ENCODE measurements at regions of chr16 and their contacts with region 1.

Region 1: DNA sequence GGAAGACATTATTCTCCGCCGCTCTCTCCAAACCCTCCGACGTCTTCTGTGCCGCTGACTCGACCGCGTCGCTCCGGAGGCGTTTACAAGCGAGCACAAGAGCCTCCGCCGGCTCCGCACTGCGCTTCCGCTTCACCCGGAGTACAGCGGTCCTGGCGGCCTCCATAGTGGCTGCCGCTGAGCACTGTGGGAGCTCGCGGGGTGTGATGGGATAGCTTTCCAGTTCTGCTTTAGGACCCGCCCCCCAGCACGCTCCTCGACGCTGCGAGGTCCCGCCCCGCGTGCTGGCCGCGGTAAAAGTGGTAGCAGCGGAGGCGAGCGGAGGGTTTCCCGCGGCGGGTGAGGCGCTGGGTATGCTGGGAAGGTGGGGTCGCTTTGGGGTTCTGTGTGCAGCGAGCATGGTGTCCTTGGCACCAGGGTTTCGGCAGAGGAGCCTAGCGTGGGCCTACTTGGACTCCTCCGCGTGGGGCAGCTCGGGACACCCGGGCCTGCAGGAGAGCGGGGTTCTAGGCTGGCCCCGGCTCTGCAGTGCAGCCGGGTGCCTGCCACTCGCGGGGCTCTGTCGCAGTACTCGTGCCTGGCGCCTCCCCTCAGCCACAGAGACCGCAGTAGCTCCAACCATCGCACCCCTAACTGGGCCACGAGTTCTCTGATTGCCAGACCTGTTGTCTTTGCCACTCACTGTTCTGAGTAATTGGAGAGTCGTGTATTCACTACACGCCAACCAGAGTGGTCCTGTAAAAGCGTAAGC is at the starts of genes PRMT7 and SLC7A6OS:
- DNase-seq: peak; percentile 90
- ATAC-seq: peak; percentile 99
- H3K4me3 ChIP-seq: peak within 1 kb of the TSS; percentile 77 to 91 (median 90)
- H3K27ac ChIP-seq: peak within 1 kb of the TSS; percentile 85
- H3K4me1 ChIP-seq: peaks cover 44% of the 10 kb centered on the region
- H3K27me3 ChIP-seq: no peaks in the 10 kb centered on the region; a peak in 1 of 5 replicates
- CTCF ChIP-seq: 0 out of 2 replicates have a peak, but pooled peaks have one; percentile 23
- EP300 ChIP-seq: peak in 1 of 2 experiments; percentile 16; a peak in 1 of 4 replicates
- POLR2A ChIP-seq: peak; percentile 97
- RAD21 ChIP-seq: peak; percentile 66
- total RNA-seq, gene PRMT7: 46.7 and 55.0 TPM in 2 replicates
- total RNA-seq, gene SLC7A6OS: 21.5 and 21.6 TPM in 2 replicates

Region 2: GRCh38 chr16:68244903-68245853 is 65.8 kb before region 1 on chr16 and contains the start of gene PLA2G15:
- CTCF ChIA-PET with region 1: no interaction called
- POLR2A ChIA-PET with region 1: interaction called, 16 read pairs
- in situ Hi-C with region 1: no loop called
- intact Hi-C with region 1: no loop called
- DNase-seq: peak; percentile 87
- ATAC-seq: peak; percentile 90
- H3K4me3 ChIP-seq: peak within 1 kb of the TSS; percentile 85 to 97 (median 89)
- H3K27ac ChIP-seq: no peak within 1 kb of the TSS
- H3K4me1 ChIP-seq: peaks cover 59% of the 10 kb centered on the region
- H3K27me3 ChIP-seq: no peaks in the 10 kb centered on the region; a peak in 1 of 5 replicates
- CTCF ChIP-seq: peak; percentile 17; the same call in 1 of the 2 replicates
- EP300 ChIP-seq: 0 out of 4 replicates have a peak, but pooled peaks of 1 of the 2 experiments have one; percentile 23
- POLR2A ChIP-seq: peak in 1 of 2 experiments; percentile 59; a peak in 1 of 4 replicates
- RAD21 ChIP-seq: 0 out of 2 replicates have a peak, but pooled peaks have one; percentile 12
- total RNA-seq, gene PLA2G15: 9.9 and 14.4 TPM in 2 replicates

Region 3: GRCh38 chr16:68264128-68265077 is 46.5 kb before region 1 on chr16 and contains the start of gene SLC7A6:
- CTCF ChIA-PET with region 1: interaction called, 4 read pairs
- POLR2A ChIA-PET with region 1: interaction called, 89 read pairs
- in situ Hi-C with region 1: no loop called
- intact Hi-C with region 1: loop called (anchors 1 kb)
- DNase-seq: peak; percentile 60
- ATAC-seq: peak; percentile 60
- H3K4me3 ChIP-seq: peak within 1 kb of the TSS; percentile 69 to 100 (median 97)
- H3K27ac ChIP-seq: peak within 1 kb of the TSS; percentile 97
- H3K4me1 ChIP-seq: peaks cover 60% of the 10 kb centered on the region
- H3K27me3 ChIP-seq: no peaks in the 10 kb centered on the region; a peak in 1 of 5 replicates
- CTCF ChIP-seq: peak; percentile 95
- EP300 ChIP-seq: 0 out of 4 replicates have a peak, but pooled peaks of 1 of the 2 experiments have one; percentile 39
- POLR2A ChIP-seq: no peak; a peak in 1 of 4 replicates
- RAD21 ChIP-seq: peak; percentile 86
- total RNA-seq, gene SLC7A6: 25.4 and 35.8 TPM in 2 replicates

Region 4: GRCh38 chr16:68281368-68282063 is 29.4 kb before region 1 on chr16:
- CTCF ChIA-PET with region 1: no interaction called
- POLR2A ChIA-PET with region 1: interaction called, 38 read pairs
- in situ Hi-C with region 1: no loop called
- intact Hi-C with region 1: no loop called
- DNase-seq: peak; percentile 97
- ATAC-seq: peak; percentile 97
- H3K4me3 ChIP-seq: peak overlapping the region in 1 of 3 experiments; percentile 26; a peak in 1 of 6 replicates
- H3K27ac ChIP-seq: peak overlapping the region; percentile 81
- H3K4me1 ChIP-seq: peaks cover 78% of the 10 kb centered on the region
- H3K27me3 ChIP-seq: no peaks in the 10 kb centered on the region
- CTCF ChIP-seq: no peak; the same call in 1 of the 2 replicates
- EP300 ChIP-seq: peak; percentile 81 to 97; a peak in 3 of 4 replicates
- POLR2A ChIP-seq: peak in 1 of 2 experiments; percentile 44; a peak in 1 of 4 replicates
- RAD21 ChIP-seq: peak; percentile 51

Region 5: GRCh38 chr16:68298907-68299561 is 11.9 kb before region 1 on chr16:
- CTCF ChIA-PET with region 1: no interaction called
- POLR2A ChIA-PET with region 1: interaction called, 60 read pairs
- in situ Hi-C with region 1: no loop called
- intact Hi-C with region 1: no loop called
- DNase-seq: peak; percentile 77
- ATAC-seq: peak; percentile 51
- H3K4me3 ChIP-seq: no peak overlapping the region
- H3K27ac ChIP-seq: peak overlapping the region; percentile 28
- H3K4me1 ChIP-seq: peaks cover 37% of the 10 kb centered on the region
- H3K27me3 ChIP-seq: no peaks in the 10 kb centered on the region
- CTCF ChIP-seq: 0 out of 2 replicates have a peak, but pooled peaks have one; percentile 11
- EP300 ChIP-seq: no peak
- POLR2A ChIP-seq: peak; percentile 36 to 50; a peak in 1 of 4 replicates
- RAD21 ChIP-seq: no peak